Heart right ventricle (tissue), 16 donors: ENCODE measurements at regions of chr2 and their contacts with region 1.

Region 1: DNA sequence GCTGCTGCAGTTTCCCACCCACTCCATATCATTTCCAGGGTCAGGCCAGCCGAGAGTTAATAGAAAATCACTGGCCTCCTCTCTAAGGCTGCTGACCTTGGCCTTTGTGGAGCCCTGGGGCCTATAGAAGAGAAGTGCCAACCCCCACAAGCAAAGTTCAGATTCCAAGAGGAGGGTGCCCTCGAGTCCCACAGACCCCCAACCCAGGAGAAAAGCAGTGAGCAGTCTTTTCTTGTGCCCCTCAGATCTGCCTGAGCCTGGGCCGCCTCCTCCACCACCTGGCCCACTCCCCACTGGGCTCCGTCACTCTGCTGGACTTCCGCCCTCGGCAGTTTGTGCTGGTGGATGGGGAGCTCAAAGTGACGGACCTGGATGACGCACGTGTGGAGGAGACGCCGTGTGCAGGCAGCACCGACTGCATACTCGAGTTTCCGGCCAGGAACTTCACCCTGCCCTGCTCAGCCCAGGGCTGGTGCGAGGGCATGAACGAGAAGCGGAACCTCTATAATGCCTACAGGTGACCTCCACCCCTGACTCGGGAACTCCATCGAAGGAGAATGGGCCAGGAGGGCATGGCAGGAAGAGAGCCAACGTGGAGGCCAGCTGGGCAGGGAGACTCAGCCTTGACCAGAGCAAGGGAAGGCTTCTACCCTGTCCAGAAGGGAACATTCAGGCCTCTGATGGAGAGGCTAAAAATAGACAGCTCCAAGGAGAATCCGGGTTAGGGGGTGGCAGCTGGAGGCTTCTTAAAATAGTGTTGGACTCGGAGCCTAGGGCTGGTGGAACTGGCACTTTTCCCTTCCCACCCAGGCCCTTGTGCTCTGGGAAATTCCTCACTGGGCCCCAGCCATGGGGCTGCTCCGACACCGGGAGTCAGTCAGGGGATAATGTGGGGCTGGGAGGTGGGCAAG is 6.2 kb downstream of the PKDCC start:
- DNase-seq: peak; percentile 56 to 73
- ATAC-seq: peak; percentile 49 to 89 (median 75)
- H3K4me3 ChIP-seq: peak overlapping the region in 2 of 10 donors; percentile 3 to 87
- H3K27ac ChIP-seq: peak overlapping the region; percentile 81 to 94 (median 91)
- H3K4me1 ChIP-seq: peaks cover 28 to 87% (median 60%) of the 10 kb centered on the region in 9 donors
- H3K27me3 ChIP-seq: peaks cover 0 to 10% (median 0%) of the 10 kb centered on the region in 7 donors
- CTCF ChIP-seq: no peak

Region 2: DNA sequence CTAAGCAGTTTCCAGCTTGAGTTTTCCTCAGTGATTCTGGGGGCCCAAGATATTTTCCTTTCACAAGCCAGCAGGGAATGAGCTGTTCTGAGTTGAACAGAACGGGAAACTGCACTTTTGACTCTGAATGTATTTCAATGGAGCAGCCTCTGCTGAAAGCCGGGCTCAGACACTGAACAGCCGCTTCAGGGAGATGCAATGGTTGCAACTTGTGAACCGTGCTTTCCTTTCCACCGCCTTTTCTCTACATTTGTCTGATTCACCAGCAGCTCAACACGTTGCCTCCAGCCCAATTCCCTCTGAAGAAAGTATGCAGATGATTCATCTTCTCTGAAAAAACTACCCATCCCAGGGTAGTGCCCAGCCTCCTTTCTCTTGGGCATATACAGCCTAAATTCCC is 125.5 kb before region 1 on chr2:
- intact Hi-C with region 1: loop called in 7 of 10 experiments (anchors 5 to 10 kb)
- DNase-seq: no peak
- ATAC-seq: no peak
- H3K4me3 ChIP-seq: no peak overlapping the region
- H3K27ac ChIP-seq: peak overlapping the region in 2 of 10 donors; percentile 4 to 83
- H3K4me1 ChIP-seq: peaks cover 13 to 66% (median 47%) of the 10 kb centered on the region in 9 donors
- H3K27me3 ChIP-seq: no peaks in the 10 kb centered on the region
- CTCF ChIP-seq: no peak

Region 3: GRCh38 chr2:41940770-41941113 is 113.3 kb before region 1 on chr2:
- intact Hi-C with region 1: loop called in 5 of 10 experiments (anchors 5 to 10 kb)
- DNase-seq: peak in 1 of 2 donors; percentile 71
- ATAC-seq: peak in 6 of 8 donors; percentile 20 to 60 (median 50)
- H3K4me3 ChIP-seq: no peak overlapping the region
- H3K27ac ChIP-seq: peak overlapping the region; percentile 0 to 87 (median 72)
- H3K4me1 ChIP-seq: peaks cover 9 to 84% (median 25%) of the 10 kb centered on the region in 9 donors
- H3K27me3 ChIP-seq: no peaks in the 10 kb centered on the region
- CTCF ChIP-seq: no peak

Region 4: DNA sequence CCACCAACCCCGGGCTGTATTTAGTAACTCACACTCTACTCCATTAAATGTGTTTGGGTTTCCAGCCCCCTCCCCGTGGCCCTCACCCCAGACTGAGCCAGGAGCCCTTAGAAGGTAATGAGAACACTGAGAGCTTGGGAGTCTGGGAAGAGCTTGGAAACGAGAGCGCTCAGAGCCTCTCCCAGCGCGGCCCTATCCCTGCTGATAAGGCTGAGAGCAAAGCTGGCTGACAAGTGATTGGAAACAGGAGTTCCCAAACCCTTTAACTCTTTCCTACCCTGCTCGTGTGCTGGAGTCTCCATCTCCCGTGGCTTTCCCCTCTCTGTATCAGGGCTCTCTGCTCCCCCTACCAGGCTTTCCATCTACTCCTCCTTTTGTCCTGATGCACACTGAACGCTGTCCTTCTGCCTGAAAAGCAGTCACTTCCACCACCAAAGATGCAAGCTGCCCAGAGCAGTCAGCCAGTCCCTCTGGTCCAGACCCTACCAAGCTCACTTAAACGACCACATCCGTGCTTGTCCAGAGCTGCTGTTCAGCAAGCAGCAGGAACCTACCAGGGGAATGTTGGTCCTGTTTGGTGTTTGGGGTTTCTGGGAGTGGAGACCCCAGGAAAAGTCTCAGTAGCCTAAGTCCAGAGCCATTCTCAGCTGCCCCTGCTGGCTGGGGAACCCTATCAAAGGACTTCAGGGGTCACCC is 106.2 kb before region 1 on chr2:
- intact Hi-C with region 1: loop called in 3 of 10 experiments (anchors 5 kb)
- DNase-seq: peak; percentile 57 to 68
- ATAC-seq: peak; percentile 88 to 96 (median 94)
- H3K4me3 ChIP-seq: no peak overlapping the region
- H3K27ac ChIP-seq: peak overlapping the region; percentile 42 to 87 (median 68)
- H3K4me1 ChIP-seq: peaks cover 0 to 69% (median 37%) of the 10 kb centered on the region in 9 donors
- H3K27me3 ChIP-seq: no peaks in the 10 kb centered on the region
- CTCF ChIP-seq: no peak

Region 5: GRCh38 chr2:42117923-42118753 is 64.1 kb after region 1 on chr2:
- intact Hi-C with region 1: no loop called
- DNase-seq: no peak
- ATAC-seq: peak; percentile 62 to 95 (median 87)
- H3K4me3 ChIP-seq: no peak overlapping the region
- H3K27ac ChIP-seq: peak overlapping the region in 8 of 10 donors; percentile 6 to 75 (median 54)
- H3K4me1 ChIP-seq: peaks cover 0 to 46% (median 20%) of the 10 kb centered on the region in 9 donors
- H3K27me3 ChIP-seq: no peaks in the 10 kb centered on the region
- CTCF ChIP-seq: no peak